GM12878 (cell line): ENCODE measurements at regions of chr2 and their contacts with region 1.

Region 1: DNA sequence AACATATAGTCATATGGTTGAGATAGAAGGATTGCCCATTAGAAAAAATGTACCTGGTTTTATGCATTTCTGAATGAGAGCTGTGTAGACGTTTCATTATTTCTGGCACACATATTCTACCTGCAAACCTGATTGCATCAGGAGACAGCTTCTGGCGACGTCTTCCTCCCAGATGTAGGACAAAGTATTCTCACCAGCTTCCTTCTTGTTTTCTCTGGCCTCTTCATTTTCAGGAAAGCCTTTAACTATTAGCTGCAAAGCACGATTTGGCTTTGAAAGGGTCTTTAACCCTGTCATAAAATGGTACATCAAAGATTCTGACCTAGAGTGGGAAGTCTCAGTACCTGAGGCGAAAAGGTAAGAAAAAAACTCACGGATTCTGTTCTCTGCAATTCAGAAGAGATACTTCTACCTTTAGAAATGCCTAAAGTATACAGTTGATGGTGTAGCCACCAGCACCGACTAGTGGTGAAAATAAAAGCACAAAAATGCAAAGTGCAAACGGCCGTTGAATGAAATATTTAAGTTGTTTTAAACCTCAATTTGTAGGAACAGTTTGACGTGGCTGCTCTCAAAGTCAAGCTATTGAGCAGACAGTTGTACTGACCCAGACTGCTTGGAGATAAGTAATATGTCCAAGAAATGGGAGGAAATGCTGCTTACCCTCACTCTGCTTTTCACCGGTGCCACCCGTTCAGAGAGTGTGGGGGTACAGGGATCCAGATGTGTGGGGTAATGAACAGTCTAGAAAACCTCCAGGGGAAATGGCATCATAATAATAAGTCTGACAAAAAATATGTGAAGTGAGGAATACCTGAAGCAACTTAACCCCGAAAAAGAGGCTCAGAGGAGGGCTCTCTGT is 20.2 kb downstream of the IL18RAP start:
- DNase-seq: no peak
- ATAC-seq: peak; percentile 93
- H3K4me3 ChIP-seq: no peak overlapping the region
- H3K27ac ChIP-seq: no peak overlapping the region
- H3K4me1 ChIP-seq: 0 out of 2 replicates have a peak, but pooled peaks cover 3% of the 10 kb centered on the region
- H3K27me3 ChIP-seq: no peaks in the 10 kb centered on the region
- CTCF ChIP-seq: peak; percentile 70 to 88 (median 86)
- EP300 ChIP-seq: no peak
- POLR2A ChIP-seq: no peak
- RAD21 ChIP-seq: peak; percentile 96

Region 2: GRCh38 chr2:102013206-102014040 is 429.8 kb before region 1 on chr2:
- CTCF ChIA-PET with region 1: interaction called, 13 read pairs
- POLR2A ChIA-PET with region 1: no interaction called
- RAD21 ChIA-PET with region 1: no interaction called
- SMC1A ChIA-PET with region 1: interaction called, 3 read pairs
- in situ Hi-C with region 1: no loop called
- intact Hi-C with region 1: loop called (anchors 5 kb)
- DNase-seq: no peak
- ATAC-seq: peak; percentile 49
- H3K4me3 ChIP-seq: no peak overlapping the region
- H3K27ac ChIP-seq: no peak overlapping the region
- H3K4me1 ChIP-seq: peaks cover 3% of the 10 kb centered on the region; the same call in 1 of the 2 replicates
- H3K27me3 ChIP-seq: no peaks in the 10 kb centered on the region
- CTCF ChIP-seq: no peak
- EP300 ChIP-seq: no peak
- POLR2A ChIP-seq: no peak
- RAD21 ChIP-seq: no peak

Region 3: GRCh38 chr2:102301867-102302362 is 141.3 kb before region 1 on chr2:
- CTCF ChIA-PET with region 1: interaction called, 54 read pairs
- POLR2A ChIA-PET with region 1: no interaction called
- RAD21 ChIA-PET with region 1: interaction called, 17 read pairs
- SMC1A ChIA-PET with region 1: interaction called, 26 read pairs
- in situ Hi-C with region 1: no loop called
- intact Hi-C with region 1: no loop called
- DNase-seq: peak; percentile 47
- ATAC-seq: peak; percentile 100
- H3K4me3 ChIP-seq: no peak overlapping the region
- H3K27ac ChIP-seq: no peak overlapping the region
- H3K4me1 ChIP-seq: no peaks in the 10 kb centered on the region
- H3K27me3 ChIP-seq: no peaks in the 10 kb centered on the region
- CTCF ChIP-seq: peak; percentile 55 to 67 (median 57)
- EP300 ChIP-seq: peak in 1 of 2 experiments; percentile 52; a peak in 1 of 4 replicates
- POLR2A ChIP-seq: no peak
- RAD21 ChIP-seq: peak; percentile 55

Region 4: DNA sequence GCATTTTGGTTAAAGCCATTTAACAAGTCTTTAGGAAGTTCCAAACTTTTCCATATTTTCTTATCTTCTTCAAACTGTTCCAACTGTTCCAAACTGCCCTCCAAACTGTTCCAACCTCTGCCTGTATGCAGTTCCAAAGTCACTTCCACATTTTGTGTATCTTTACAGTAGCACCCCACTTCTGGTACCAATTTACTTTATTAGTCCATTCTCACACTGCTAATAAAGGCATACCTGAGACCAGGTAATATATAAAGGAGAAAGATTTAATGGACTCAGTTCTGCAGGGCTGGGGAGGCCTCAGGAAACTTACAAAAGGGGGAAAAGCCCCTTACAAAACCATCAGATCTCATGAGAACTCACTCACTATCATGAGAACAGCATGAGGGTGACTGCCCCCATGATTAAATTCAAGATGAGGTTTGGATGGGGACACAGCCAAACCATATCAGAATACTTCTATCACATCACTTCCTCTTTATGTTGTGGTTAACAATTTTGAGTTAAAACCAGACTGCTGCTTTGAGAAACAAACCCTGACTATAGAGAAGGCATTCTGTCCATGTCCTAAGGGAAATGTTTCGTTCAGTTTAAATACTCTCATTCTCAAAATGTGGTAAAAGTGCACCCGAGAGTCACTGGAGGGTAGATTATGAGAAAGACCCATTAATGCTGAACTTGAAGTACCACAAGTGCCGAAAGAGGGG is 76.6 kb before region 1 on chr2:
- CTCF ChIA-PET with region 1: interaction called, 58 read pairs
- POLR2A ChIA-PET with region 1: no interaction called
- RAD21 ChIA-PET with region 1: no interaction called
- SMC1A ChIA-PET with region 1: interaction called, 10 read pairs
- in situ Hi-C with region 1: no loop called
- intact Hi-C with region 1: no loop called
- DNase-seq: peak; percentile 91
- ATAC-seq: peak; percentile 79
- H3K4me3 ChIP-seq: no peak overlapping the region
- H3K27ac ChIP-seq: peak overlapping the region; percentile 93
- H3K4me1 ChIP-seq: peaks cover 23% of the 10 kb centered on the region
- H3K27me3 ChIP-seq: no peaks in the 10 kb centered on the region
- CTCF ChIP-seq: no peak
- EP300 ChIP-seq: peak in 1 of 2 experiments; percentile 45; a peak in 2 of 4 replicates
- POLR2A ChIP-seq: no peak
- RAD21 ChIP-seq: peak; percentile 8; the same call in 1 of the 2 replicates